Transverse colon (tissue), 4 donors: ENCODE measurements at regions of chr1 and their contacts with region 1.

Region 1: DNA sequence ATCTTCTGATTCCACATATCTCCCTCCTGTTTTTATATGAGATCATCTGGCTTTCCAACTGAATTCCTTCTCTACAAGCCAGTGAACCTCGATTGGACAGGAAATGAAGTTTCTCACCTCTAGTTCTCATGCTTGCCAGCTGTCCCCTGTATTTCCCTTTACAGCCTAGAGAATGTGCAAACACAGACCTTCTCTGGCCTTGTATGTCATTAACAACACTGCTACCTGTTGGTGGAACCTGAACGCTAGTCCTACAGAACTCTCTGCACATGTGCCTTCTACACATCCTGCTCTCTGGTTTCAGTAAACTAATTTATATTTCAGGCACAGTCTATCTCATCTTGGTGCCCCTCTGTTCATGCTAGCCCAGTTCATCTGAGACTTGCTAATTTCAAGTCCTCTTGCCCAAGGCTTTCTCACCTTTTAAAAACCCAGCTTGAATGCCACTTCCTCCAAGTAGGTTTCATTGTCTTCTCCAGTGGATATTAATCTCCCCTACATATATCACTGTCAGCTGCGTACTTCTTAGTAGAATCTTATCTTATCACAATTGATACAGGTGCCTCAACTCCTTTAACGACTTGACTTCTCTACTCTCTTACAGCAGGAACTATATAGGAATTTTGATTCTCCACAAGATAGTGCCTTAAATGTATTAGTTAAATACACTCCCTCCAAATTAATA is 549.9 kb downstream of the PLPP3 start:
- DNase-seq: peak; percentile 8
- H3K4me3 ChIP-seq: no peak overlapping the region
- H3K27ac ChIP-seq: peak overlapping the region in 2 of 4 donors; percentile 6 to 10
- H3K4me1 ChIP-seq: no peaks in the 10 kb centered on the region
- H3K27me3 ChIP-seq: no peaks in the 10 kb centered on the region
- CTCF ChIP-seq: peak in 2 of 5 experiments; percentile 9 to 11
- EP300 ChIP-seq: no peak
- POLR2A ChIP-seq: no peak

Region 2: DNA sequence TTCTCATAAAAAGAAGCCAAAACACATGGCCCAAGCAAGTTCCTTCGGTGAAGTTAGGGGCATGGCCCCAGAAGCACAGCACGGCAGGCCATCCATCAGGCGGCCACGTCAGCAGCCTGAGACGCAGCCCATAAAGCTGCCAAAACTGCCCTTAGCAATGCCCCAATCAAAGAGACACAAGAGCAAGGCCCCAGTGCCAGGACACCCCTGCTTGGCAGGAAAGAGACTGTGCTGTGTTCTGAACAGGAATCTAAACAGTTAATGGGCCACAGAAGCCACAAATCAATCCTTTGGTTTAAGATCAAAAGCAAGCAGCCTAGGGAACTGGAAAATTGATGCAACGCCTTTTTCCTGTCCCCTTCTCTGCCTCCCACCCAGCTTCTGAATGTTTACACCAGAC is 317.3 kb before region 1 on chr1:
- in situ Hi-C with region 1: no loop called
- intact Hi-C with region 1: no loop called
- DNase-seq: no peak
- H3K4me3 ChIP-seq: no peak overlapping the region
- H3K27ac ChIP-seq: no peak overlapping the region
- H3K4me1 ChIP-seq: no peaks in the 10 kb centered on the region
- H3K27me3 ChIP-seq: no peaks in the 10 kb centered on the region
- CTCF ChIP-seq: no peak
- EP300 ChIP-seq: no peak
- POLR2A ChIP-seq: no peak

Region 3: DNA sequence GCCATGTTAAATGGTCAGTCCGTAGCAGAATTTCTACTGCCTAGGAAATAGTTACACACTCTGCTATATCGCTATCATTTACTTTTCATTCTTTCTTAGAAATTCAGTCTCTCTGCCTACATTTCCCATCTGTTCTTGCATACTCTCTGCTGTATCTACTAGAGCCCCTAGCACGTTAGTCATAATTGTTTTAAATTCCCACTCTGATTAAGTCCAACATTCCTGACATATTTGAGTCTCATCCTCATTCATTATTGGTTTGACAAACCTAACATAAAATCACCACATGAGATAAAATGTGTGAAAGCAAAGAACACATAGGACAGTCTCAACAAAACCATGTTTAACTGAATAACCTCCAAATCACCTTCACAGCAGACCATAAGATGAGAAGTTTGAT is 36.3 kb after region 1 on chr1:
- in situ Hi-C with region 1: no loop called
- intact Hi-C with region 1: loop called (anchors 1 kb)
- DNase-seq: no peak
- H3K4me3 ChIP-seq: no peak overlapping the region
- H3K27ac ChIP-seq: no peak overlapping the region
- H3K4me1 ChIP-seq: no peaks in the 10 kb centered on the region
- H3K27me3 ChIP-seq: no peaks in the 10 kb centered on the region
- CTCF ChIP-seq: no peak
- EP300 ChIP-seq: no peak
- POLR2A ChIP-seq: no peak

Region 4: GRCh38 chr1:56255516-56256152 is 226.2 kb after region 1 on chr1:
- in situ Hi-C with region 1: no loop called
- intact Hi-C with region 1: no loop called
- DNase-seq: peak; percentile 52
- H3K4me3 ChIP-seq: no peak overlapping the region
- H3K27ac ChIP-seq: peak overlapping the region in 3 of 4 donors; percentile 10 to 30 (median 22)
- H3K4me1 ChIP-seq: peaks cover 0 to 6% (median 2%) of the 10 kb centered on the region in 4 donors
- H3K27me3 ChIP-seq: no peaks in the 10 kb centered on the region
- CTCF ChIP-seq: no peak
- EP300 ChIP-seq: no peak
- POLR2A ChIP-seq: no peak